A673 (cell line): ENCODE measurements at regions of chr3 and their contacts with region 1.

Region 1: DNA sequence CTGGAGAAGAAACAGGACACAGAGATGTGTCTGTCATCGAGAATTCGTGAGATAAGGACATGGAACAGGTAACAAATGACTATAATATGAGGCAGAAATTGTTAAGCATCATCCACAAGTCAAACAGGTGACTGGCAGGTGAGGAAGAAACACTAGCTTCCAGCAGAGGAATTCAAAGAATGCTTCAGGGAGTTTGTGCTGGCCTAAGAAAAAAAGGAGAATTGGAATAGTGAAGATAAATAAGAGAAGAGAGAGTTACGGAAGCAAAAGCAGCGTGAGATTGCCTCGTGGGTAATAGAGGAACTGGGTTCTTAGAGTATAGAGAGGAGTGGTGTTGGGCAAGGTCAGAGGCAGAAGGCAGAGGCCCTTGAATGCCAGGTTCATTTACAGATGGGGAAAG is 22.9 kb upstream of the FGF12 start:
- DNase-seq: no peak
- H3K4me3 ChIP-seq: no peak overlapping the region
- H3K27ac ChIP-seq: no peak overlapping the region
- H3K4me1 ChIP-seq: no peaks in the 10 kb centered on the region
- H3K27me3 ChIP-seq: no peaks in the 10 kb centered on the region
- CTCF ChIP-seq: no peak

Region 2: DNA sequence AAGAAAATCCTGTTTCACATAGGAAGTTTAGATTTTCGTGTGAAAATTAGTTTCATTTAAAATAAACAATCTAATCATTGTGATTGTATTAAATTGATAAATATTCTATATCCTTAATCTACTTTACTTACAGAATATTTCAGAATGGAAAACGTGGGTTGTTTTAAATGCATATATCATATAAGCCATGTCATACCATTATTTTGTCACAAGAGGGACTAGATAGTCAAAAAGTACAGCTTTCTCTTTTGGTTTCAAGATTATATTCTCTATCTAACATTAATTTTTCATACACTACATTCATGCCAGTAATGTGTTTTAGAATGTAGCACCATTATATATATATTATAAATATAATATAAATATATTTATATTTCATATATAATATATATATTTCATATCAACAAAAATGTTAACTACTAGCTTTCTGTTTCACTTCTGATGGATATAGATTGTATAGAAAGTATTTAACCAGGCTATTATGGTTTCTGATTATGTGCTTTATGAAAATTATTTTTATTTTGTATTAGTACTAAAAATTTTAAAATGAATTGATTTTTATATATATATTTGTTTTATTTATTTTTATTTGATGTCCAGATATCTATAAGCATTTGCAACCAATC is 1505.8 kb before region 1 on chr3:
- CTCF ChIA-PET with region 1: interaction called, 10 read pairs
- POLR2A ChIA-PET with region 1: no interaction called
- intact Hi-C with region 1: no loop called
- DNase-seq: peak; percentile 40
- H3K4me3 ChIP-seq: no peak overlapping the region
- H3K27ac ChIP-seq: no peak overlapping the region
- H3K4me1 ChIP-seq: peaks cover 24% of the 10 kb centered on the region
- H3K27me3 ChIP-seq: no peaks in the 10 kb centered on the region
- CTCF ChIP-seq: peak; percentile 62; the same call in 1 of the 2 replicates

Region 3: GRCh38 chr3:192719964-192720363 is 30.2 kb before region 1 on chr3:
- CTCF ChIA-PET with region 1: no interaction called
- POLR2A ChIA-PET with region 1: no interaction called
- intact Hi-C with region 1: no loop called
- DNase-seq: no peak
- H3K4me3 ChIP-seq: no peak overlapping the region
- H3K27ac ChIP-seq: no peak overlapping the region
- H3K4me1 ChIP-seq: no peaks in the 10 kb centered on the region
- H3K27me3 ChIP-seq: peaks cover 13% of the 10 kb centered on the region
- CTCF ChIP-seq: no peak

Region 4: DNA sequence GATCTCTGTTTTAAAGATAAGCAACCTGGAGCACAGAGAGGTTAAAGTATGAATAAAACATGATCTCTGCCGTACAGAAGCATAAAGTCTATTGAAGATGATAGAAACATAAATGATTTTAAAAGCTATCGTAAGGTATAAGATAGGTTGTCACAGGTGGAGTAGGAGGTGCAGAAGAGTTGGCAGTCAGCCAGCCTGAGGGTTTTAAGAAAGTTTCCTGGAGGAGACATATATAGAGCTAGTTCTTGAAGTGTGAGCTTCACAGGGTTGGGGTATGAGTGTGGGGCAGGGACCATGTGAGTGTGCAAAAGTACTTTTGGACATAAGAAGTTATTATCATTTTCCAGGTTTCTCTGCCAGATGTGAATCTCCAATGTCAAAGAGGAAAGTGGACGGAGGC is 19.0 kb before region 1 on chr3:
- CTCF ChIA-PET with region 1: no interaction called
- POLR2A ChIA-PET with region 1: no interaction called
- intact Hi-C with region 1: loop called (anchors 2 kb)
- DNase-seq: no peak
- H3K4me3 ChIP-seq: no peak overlapping the region
- H3K27ac ChIP-seq: no peak overlapping the region
- H3K4me1 ChIP-seq: peaks cover 7% of the 10 kb centered on the region
- H3K27me3 ChIP-seq: peaks cover 16% of the 10 kb centered on the region
- CTCF ChIP-seq: no peak